ENCODE measurements at regions of chr18 and their contacts with region 1.

Region 1: DNA sequence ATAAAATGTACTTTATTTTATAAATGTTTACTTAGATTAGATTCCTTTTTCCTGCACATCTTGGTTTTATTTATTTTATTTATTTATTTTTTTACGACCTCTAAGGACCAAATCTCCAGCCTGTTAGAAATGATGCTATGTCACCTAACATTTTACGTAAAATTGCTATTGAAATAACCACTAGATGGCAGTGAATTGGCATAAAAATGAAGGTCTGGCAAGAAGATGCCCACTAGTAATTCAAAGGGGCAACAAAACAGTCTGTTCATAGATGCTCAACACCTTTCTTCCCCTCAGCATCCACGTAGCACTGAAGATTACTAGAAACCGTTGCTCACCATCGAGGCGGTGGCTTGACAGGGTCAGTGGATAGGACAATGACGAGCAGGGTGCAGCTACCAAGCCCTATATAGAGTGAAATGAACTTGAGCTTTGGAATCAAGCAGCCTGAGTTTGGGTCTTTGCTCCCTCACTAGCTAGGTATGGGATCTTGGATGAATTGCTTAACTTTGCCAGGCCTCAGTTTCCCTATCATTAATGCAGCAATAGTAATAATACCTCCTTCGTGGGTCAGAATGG is 128.7 kb upstream of the L3MBTL4 start:
- DNase-seq: no peak

Region 2: DNA sequence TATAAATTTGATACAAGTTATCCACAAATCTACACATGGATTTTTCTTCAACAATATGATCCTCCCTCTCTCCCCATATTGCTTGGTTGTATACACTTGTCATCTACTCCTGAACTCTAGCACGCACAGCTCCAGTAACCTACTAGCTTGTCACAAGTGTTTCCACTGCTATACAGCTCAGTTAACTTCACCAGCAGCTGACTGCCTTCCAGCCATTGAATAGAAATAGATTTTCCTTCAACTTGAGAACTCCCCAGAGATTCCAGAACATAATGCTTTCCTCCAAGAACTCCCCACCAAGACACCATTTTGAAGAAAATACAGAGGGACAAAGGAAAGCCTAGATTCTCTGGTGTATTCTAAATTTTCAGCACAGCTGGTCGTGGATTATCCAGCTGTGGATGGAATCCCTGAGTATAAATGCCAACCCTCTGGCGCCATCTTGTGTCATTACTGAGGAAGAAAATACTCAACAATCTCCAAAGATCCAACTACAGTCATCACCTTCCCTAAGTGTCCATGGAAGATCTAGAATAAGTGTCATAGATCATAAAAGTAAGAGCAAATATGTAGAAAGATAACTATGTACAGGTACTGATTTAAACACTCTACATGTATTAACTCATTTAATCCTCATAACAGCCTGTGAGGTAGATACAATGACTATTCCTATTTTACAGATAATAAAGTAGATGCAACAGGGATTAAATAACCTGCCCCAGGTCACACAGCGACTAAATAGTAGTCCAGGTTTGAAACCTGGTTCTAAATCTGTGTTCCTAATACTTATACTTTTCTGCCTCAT is 342.8 kb after region 1 on chr18:
- CTCF ChIA-PET with region 1: interaction called, 14 read pairs
- POLR2A ChIA-PET with region 1: no interaction called
- DNase-seq: peak; percentile 48